ENCODE measurements at regions of chr15 and their contacts with region 1.

Region 1: DNA sequence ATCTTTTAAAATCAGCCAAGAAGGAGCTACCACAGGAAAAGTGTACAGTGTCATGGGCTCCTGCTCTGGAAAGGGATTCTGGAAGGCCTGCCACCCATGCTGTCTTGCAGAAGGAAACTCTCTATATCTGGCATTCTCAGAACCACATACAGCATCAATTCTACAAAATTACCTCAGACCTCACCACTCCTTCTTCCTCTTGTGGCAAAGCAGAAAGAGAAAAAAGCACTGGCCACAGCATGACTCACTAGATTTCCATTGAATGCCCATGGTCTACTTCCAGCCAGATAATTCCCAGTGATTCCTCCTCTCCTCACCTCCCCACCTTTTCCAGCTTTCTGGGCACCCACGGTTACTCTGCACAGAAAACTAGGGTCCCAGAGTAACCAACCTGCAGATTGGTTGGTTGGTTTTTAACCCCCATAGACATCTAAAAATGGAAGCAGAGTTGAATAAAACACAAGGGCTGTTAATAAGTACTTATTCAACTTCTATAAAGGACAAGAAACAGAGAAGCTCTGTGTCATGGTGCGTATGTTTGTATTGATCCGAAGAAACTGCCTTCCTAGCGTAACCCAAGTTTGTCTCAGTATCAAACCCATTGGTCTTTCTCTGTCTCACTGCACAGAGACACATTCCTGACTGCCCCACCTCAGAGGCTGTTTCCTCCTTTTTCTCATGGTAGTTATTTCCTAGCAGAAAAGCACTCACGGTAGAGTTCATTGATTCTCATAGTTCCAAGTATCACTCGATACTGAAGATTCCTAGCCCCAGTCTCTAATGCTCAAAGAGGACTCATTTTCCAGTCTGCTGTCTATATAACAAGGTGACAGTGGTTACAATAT is 67.7 kb downstream of the LDHAL6B start:
- DNase-seq: peak; percentile 77
- H3K4me3 Mint-ChIP-seq: peak overlapping the region; percentile 60
- H3K27ac Mint-ChIP-seq: peak overlapping the region; percentile 100
- H3K4me1 Mint-ChIP-seq: peaks cover 86% of the 10 kb centered on the region
- H3K27me3 Mint-ChIP-seq: no peaks in the 10 kb centered on the region
- CTCF ChIP-seq: no peak

Region 2: GRCh38 chr15:59255647-59256380 is 18.5 kb before region 1 on chr15:
- CTCF ChIA-PET with region 1: interaction called, 5 read pairs
- intact Hi-C with region 1: loop called (anchors 1 kb)
- DNase-seq: peak; percentile 86
- H3K4me3 Mint-ChIP-seq: peak overlapping the region; percentile 42
- H3K27ac Mint-ChIP-seq: peak overlapping the region; percentile 98
- H3K4me1 Mint-ChIP-seq: peaks cover 65% of the 10 kb centered on the region
- H3K27me3 Mint-ChIP-seq: no peaks in the 10 kb centered on the region
- CTCF ChIP-seq: no peak